Activated CD8-positive, alpha-beta T cell treated with anti-CD3 and anti-CD28 coated beads for 36 hours (primary cell): ENCODE measurements at regions of chr3 and their contacts with region 1.

Region 1: DNA sequence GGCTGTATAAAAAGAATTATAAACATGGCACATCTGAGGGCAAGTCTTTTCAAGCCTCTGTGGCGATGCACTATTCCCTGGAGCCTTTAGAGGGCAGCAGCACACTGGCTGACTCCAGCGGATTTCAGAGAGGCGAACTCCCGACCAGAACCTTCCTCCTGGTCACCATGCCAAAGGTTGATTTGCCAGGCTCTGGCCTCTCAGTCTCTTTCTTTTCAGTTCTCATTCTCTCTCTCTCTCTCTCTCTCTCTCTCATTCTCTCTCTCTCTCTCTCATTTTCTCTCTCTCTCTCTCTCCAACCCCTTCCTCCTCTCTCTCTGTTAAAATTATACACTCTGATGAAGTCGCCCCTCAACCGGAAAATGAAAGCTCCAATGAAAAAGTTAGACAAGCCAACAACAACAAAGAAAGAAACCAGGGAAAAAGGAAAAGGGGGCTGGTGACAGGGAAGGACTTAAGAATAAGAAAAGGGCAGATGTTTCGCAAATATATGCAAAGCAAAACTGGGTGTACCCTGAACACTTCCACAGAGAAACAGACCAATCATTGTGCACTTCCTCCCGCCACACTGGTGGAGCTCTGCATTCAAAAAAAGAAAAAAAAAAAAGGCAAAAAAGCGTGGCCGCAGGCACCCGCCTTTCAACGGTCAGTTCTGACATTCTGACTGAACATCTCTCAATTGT is 90.2 kb downstream of the TIGIT start:
- DNase-seq: peak; percentile 83
- ATAC-seq: peak; percentile 96
- H3K4me3 Mint-ChIP-seq: no peak overlapping the region
- H3K27ac Mint-ChIP-seq: no peak overlapping the region
- H3K4me1 Mint-ChIP-seq: peaks cover 7% of the 10 kb centered on the region
- H3K27me3 Mint-ChIP-seq: no peaks in the 10 kb centered on the region
- CTCF ChIP-seq: peak; percentile 93

Region 2: GRCh38 chr3:114362815-114363214 is 21.2 kb before region 1 on chr3:
- CTCF ChIA-PET with region 1: interaction called, 34 read pairs
- POLR2A ChIA-PET with region 1: interaction called, 3 read pairs
- intact Hi-C with region 1: no loop called
- DNase-seq: no peak
- ATAC-seq: peak; percentile 74
- H3K4me3 Mint-ChIP-seq: no peak overlapping the region
- H3K27ac Mint-ChIP-seq: no peak overlapping the region
- H3K4me1 Mint-ChIP-seq: peaks cover 22% of the 10 kb centered on the region
- H3K27me3 Mint-ChIP-seq: no peaks in the 10 kb centered on the region
- CTCF ChIP-seq: peak; percentile 62

Region 3: DNA sequence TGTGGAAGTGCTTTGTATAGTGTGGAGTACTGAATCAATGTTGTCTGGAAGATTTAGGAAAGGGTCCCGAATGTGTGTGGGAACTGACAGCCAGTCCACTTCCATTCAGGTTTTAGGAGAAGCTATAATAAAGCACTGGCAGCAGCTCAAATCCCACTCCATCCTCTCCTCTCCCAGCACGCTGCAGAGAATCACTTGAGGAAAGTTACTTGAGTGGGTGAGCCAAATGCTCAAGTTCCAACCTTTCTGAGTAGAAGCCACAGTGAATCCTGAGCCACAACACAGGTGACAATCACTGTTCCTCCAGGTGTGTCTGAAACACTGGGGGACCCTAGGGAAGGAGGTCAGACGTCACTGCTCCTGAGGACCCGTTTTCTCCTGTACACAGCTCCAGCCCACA is 16.4 kb after region 1 on chr3:
- CTCF ChIA-PET with region 1: interaction called, 35 read pairs
- POLR2A ChIA-PET with region 1: no interaction called
- intact Hi-C with region 1: no loop called
- DNase-seq: no peak
- ATAC-seq: no peak
- H3K4me3 Mint-ChIP-seq: no peak overlapping the region
- H3K27ac Mint-ChIP-seq: no peak overlapping the region
- H3K4me1 Mint-ChIP-seq: peaks cover 3% of the 10 kb centered on the region
- H3K27me3 Mint-ChIP-seq: no peaks in the 10 kb centered on the region
- CTCF ChIP-seq: no peak

Region 4: DNA sequence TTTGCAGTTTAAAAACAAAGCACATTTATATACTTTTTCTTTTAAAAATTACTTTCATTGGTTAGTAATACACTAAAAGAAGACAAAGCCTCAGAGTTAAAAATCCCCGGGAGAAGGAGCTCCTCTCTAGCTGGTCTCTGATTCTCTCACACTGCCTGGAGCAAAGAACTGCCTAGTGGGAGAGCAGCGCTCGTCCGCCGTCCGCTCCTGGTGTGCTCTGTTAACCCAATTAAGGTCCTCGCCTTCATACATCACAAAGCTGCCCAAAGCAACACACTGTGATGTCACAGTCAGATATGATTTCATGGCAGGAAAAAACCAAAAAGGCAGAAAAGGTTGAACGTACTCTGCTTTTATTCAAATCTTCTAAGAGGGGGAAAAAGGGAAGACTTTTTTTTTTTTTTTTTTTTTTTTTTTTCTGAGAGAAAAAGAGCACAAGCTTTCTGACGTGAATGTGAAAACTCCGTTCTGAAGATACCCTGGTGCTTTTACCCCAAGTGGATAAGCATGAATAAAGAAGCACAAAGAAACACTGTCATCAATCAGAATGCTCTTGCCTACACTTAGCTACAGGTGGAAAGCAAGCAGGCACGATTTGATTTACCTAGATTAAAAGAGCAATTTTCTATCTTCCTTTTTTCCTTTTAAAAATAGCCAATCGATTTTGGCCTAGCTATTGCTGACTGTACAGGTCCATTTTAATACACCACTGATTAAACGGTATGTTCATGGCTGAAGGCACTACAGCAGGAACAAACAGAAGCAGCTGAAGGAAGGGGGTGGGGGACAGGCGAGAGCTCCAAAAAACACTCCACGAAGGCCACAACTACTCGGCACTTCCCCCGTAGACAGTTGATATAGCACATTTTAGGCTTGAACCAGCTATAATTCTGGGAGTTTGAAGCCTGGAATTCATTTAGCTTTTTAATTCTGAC is 25.0 kb after region 1 on chr3:
- CTCF ChIA-PET with region 1: interaction called, 175 read pairs
- POLR2A ChIA-PET with region 1: no interaction called
- intact Hi-C with region 1: no loop called
- DNase-seq: no peak
- ATAC-seq: no peak
- H3K4me3 Mint-ChIP-seq: no peak overlapping the region
- H3K27ac Mint-ChIP-seq: no peak overlapping the region
- H3K4me1 Mint-ChIP-seq: peaks cover 36% of the 10 kb centered on the region
- H3K27me3 Mint-ChIP-seq: no peaks in the 10 kb centered on the region
- CTCF ChIP-seq: no peak